ENCODE measurements at regions of chr17 and their contacts with region 1.

Region 1: DNA sequence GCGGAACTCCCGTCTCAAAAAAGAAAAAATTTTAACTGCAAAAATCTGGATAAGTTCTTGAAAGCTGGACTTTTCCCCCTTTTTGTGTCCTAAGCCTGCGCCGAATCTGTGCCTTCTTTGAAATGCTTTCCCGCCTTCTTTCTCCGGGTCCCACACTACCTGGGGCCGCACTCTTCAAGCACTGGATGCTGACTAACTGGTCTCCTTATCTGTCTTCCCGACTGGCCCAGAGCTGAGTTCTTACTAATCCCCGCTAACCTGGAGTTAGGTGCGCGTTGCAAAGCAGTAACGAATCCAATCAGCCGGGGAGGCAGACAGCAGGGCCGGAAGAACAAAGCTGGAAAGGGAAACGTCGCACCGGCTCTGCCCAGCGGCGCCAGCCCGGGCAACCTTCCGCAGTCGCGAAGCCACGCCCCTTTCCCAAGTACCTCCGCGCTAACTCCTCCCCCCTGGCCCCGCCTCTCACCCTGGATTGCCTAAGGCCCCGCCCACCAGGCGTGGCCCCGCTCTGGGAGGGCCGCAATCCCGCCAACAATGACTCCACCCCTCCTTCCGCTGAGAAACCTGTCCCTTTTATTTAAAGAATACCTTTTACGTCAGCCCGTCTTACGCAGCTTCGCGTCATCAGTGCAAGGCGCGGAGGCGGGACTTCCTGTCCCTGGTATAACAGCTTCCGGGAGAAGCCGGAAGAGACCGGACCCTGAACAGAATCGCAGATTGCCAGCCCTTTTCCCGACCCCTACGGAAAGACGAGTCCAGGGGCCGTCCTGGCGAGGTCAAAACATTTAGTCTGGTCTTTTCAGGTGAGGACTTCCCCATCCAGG is at the start of gene TMUB2:
- DNase-seq: peak; percentile 100
- ATAC-seq: peak; percentile 98
- H3K4me3 Mint-ChIP-seq: peak within 1 kb of the TSS; percentile 100
- H3K27ac Mint-ChIP-seq: peak within 1 kb of the TSS; percentile 99
- H3K4me1 Mint-ChIP-seq: peaks cover 33% of the 10 kb centered on the region
- H3K27me3 Mint-ChIP-seq: no peaks in the 10 kb centered on the region
- CTCF ChIP-seq: no peak
- total RNA-seq, gene TMUB2: 17.5 TPM

Region 2: DNA sequence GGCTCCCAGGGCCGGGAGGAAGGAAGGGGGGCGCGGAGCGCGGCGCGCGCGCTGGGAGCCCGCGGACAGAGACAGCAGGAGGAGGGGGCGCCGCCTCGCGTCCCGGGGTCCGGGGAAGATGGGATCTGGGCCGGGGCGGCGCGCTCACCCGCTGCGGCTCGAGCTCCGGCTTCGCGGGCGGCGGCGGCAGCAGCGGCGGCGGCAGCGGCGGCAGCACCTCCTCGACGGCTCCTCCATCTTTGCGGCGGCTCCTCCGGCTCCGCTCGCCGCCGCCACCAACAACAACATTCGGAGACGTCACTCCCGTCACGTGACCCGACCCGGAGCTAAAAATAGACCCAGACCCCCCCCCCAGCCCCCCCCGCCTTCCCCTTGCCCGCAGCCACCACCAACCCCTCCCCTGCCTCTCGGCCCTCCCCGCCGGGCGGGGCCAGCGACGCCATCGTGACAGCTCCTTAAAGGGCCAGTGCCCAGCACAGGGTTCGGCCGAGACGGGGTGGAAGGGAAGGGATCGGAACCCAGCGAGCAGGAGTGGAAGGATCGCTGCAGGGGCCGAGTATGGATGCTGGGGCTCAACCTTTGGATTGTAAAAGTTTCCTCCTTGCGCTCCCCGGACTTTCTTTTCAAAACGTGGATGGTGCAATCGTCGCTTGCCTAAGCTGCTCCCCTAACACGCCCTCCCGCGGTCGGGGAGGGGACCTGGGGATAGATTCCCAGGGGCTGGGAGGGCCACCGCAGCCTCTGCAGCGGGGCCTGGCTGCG is 63.0 kb before region 1 on chr17 and contains the start of gene HDAC5:
- CTCF ChIA-PET with region 1: interaction called, 10 read pairs
- POLR2A ChIA-PET with region 1: interaction called, 12 read pairs
- intact Hi-C with region 1: no loop called
- DNase-seq: peak; percentile 97
- ATAC-seq: peak; percentile 97
- H3K4me3 Mint-ChIP-seq: peak within 1 kb of the TSS; percentile 82
- H3K27ac Mint-ChIP-seq: peak within 1 kb of the TSS; percentile 96
- H3K4me1 Mint-ChIP-seq: peaks cover 26% of the 10 kb centered on the region
- H3K27me3 Mint-ChIP-seq: no peaks in the 10 kb centered on the region
- CTCF ChIP-seq: peak; percentile 50
- total RNA-seq, gene HDAC5: 19.1 to 19.3 TPM

Region 3: GRCh38 chr17:44170499-44171201 is 15.9 kb before region 1 on chr17 and contains the start of gene ASB16:
- CTCF ChIA-PET with region 1: interaction called, 20 read pairs
- POLR2A ChIA-PET with region 1: interaction called, 37 read pairs
- intact Hi-C with region 1: no loop called
- DNase-seq: no peak
- ATAC-seq: no peak
- H3K4me3 Mint-ChIP-seq: no peak within 1 kb of the TSS
- H3K27ac Mint-ChIP-seq: no peak within 1 kb of the TSS
- H3K4me1 Mint-ChIP-seq: no peaks in the 10 kb centered on the region
- H3K27me3 Mint-ChIP-seq: no peaks in the 10 kb centered on the region
- CTCF ChIP-seq: no peak
- total RNA-seq, gene ASB16: 0.18 to 0.27 TPM

Region 4: GRCh38 chr17:44199553-44200477 is 13.3 kb after region 1 on chr17 and contains the start of gene ATXN7L3:
- CTCF ChIA-PET with region 1: interaction called, 17 read pairs
- POLR2A ChIA-PET with region 1: interaction called, 15 read pairs
- intact Hi-C with region 1: no loop called
- DNase-seq: peak; percentile 100
- ATAC-seq: peak; percentile 85
- H3K4me3 Mint-ChIP-seq: peak within 1 kb of the TSS; percentile 89
- H3K27ac Mint-ChIP-seq: peak within 1 kb of the TSS; percentile 97
- H3K4me1 Mint-ChIP-seq: peaks cover 38% of the 10 kb centered on the region
- H3K27me3 Mint-ChIP-seq: no peaks in the 10 kb centered on the region
- CTCF ChIP-seq: no peak
- total RNA-seq, gene ATXN7L3: 58.1 to 62.3 TPM

Region 5: GRCh38 chr17:44344939-44345453 is 158.5 kb after region 1 on chr17 and contains the start of gene GRN:
- CTCF ChIA-PET with region 1: interaction called, 17 read pairs
- POLR2A ChIA-PET with region 1: no interaction called
- intact Hi-C with region 1: no loop called
- DNase-seq: peak; percentile 95
- ATAC-seq: peak; percentile 99
- H3K4me3 Mint-ChIP-seq: peak within 1 kb of the TSS; percentile 93
- H3K27ac Mint-ChIP-seq: peak within 1 kb of the TSS; percentile 81
- H3K4me1 Mint-ChIP-seq: peaks cover 19% of the 10 kb centered on the region
- H3K27me3 Mint-ChIP-seq: no peaks in the 10 kb centered on the region
- CTCF ChIP-seq: no peak
- total RNA-seq, gene GRN: 34.8 to 35.5 TPM